ENCODE measurements at regions of chr1 and their contacts with region 1.

Region 1: DNA sequence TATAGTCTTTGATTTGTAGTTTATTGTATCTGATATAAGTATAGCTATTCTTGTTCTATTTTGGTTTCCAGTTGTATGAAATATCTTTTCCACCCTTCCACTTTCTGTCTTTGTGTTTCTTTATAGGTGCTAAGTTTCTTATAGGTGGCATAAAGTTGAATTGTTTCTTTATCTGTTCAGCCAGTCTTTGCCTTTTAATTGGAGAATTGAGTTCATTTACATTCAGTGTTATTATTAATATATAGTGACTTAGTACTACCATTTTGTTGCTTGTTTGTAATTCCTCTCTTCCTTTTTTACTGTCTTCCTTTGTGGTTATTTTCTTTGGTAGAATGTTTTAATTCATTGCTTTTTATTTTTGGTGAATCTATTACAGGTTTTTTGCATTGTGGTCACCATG is 77.7 kb downstream of the MAGI3 start:
- DNase-seq: no peak
- ATAC-seq: no peak
- H3K4me3 ChIP-seq: no peak overlapping the region
- H3K27ac ChIP-seq: no peak overlapping the region
- H3K4me1 ChIP-seq: no peaks in the 10 kb centered on the region
- H3K27me3 ChIP-seq: no peaks in the 10 kb centered on the region
- CTCF ChIP-seq: no peak
- POLR2A ChIP-seq: no peak

Region 2: GRCh38 chr1:113369040-113369439 is 99.0 kb before region 1 on chr1:
- intact Hi-C with region 1: loop called in 1 of 10 experiments (anchors 10 kb)
- DNase-seq: no peak
- ATAC-seq: no peak
- H3K4me3 ChIP-seq: no peak overlapping the region
- H3K27ac ChIP-seq: no peak overlapping the region
- H3K4me1 ChIP-seq: no peaks in the 10 kb centered on the region
- H3K27me3 ChIP-seq: no peaks in the 10 kb centered on the region
- CTCF ChIP-seq: no peak
- POLR2A ChIP-seq: no peak

Region 3: GRCh38 chr1:113405573-113405972 is 62.4 kb before region 1 on chr1:
- intact Hi-C with region 1: loop called in 1 of 10 experiments (anchors 10 kb)
- DNase-seq: no peak
- ATAC-seq: peak in 1 of 4 donors; percentile 33
- H3K4me3 ChIP-seq: no peak overlapping the region
- H3K27ac ChIP-seq: no peak overlapping the region
- H3K4me1 ChIP-seq: peaks cover 0 to 15% (median 5%) of the 10 kb centered on the region in 12 donors
- H3K27me3 ChIP-seq: no peaks in the 10 kb centered on the region
- CTCF ChIP-seq: no peak
- POLR2A ChIP-seq: no peak

Region 4: GRCh38 chr1:113442131-113442530 is 25.9 kb before region 1 on chr1:
- intact Hi-C with region 1: no loop called
- DNase-seq: no peak
- ATAC-seq: no peak
- H3K4me3 ChIP-seq: no peak overlapping the region
- H3K27ac ChIP-seq: no peak overlapping the region
- H3K4me1 ChIP-seq: peaks cover 0 to 6% (median 0%) of the 10 kb centered on the region in 12 donors
- H3K27me3 ChIP-seq: no peaks in the 10 kb centered on the region
- CTCF ChIP-seq: no peak
- POLR2A ChIP-seq: no peak

Measured in heart left ventricle (tissue), 16 donors.